ENCODE measurements at regions of chr21 and their contacts with region 1.

Region 1: DNA sequence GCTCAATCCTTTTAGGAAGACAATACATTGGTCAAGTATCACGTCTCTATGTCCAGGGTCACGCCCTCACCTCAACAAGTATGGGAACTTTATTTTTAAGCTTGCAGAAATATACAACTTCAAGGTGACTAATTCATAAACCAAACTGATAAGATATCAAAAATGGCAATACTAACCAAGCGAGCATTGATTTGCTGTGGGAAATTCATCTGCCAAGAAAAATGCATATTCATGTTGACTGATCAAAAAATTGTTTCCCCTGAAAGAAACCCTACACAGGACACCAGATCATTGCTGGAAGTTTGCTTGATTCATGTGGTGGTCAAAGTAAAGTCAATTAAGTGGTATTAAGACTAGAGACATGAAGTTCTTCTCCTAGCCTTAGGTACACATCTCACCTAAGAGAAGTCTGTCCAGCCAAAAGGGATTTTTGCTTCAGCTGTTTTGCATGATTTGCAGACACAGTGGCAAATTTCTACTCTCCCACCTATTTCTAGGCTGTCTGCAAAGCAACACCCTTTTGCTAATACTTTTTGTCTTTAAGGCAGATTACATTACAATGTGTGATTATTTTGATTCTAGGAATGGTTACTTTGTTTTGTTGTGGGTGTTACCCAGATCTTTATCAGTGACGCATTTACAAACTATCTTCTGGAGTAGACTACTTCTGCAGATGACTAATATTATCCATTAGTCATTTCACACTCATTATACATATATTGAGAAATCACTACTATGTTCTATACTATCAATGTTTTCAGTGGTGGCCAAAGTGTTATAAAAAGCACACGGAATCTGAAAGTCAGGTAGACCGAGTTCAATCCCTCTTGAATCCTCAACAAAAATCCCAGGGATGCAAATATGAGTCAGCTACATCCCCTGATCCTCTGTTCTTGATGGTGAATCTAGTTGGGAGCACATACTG is 12.3 kb downstream of the SAMSN1 start:
- DNase-seq: peak; percentile 88
- H3K4me3 ChIP-seq: no peak overlapping the region
- H3K27ac ChIP-seq: peak overlapping the region; percentile 47
- H3K4me1 ChIP-seq: peaks cover 13% of the 10 kb centered on the region
- H3K27me3 ChIP-seq: no peaks in the 10 kb centered on the region
- CTCF ChIP-seq: no peak

Region 2: GRCh38 chr21:14482165-14482564 is 51.6 kb before region 1 on chr21:
- CTCF ChIA-PET with region 1: no interaction called
- dilution Hi-C with region 1: no loop called
- in situ Hi-C with region 1: no loop called
- intact Hi-C with region 1: loop called (anchors 5 kb)
- DNase-seq: no peak
- H3K4me3 ChIP-seq: no peak overlapping the region
- H3K27ac ChIP-seq: no peak overlapping the region
- H3K4me1 ChIP-seq: peaks cover 6% of the 10 kb centered on the region
- H3K27me3 ChIP-seq: no peaks in the 10 kb centered on the region
- CTCF ChIP-seq: no peak

Measured in mammary epithelial cell (primary cell).